ENCODE measurements at regions of chr17 and their contacts with region 1.

Region 1: GRCh38 chr17:56319517-56319916 is 166.2 kb downstream of the ANKFN1 start:
- DNase-seq: peak in 1 of 2 donors; percentile 70
- H3K4me3 ChIP-seq: no peak overlapping the region
- H3K27ac ChIP-seq: no peak overlapping the region
- H3K4me1 ChIP-seq: peaks cover 0 to 5% (median 2%) of the 10 kb centered on the region in 4 donors
- H3K27me3 ChIP-seq: peaks cover 0 to 17% (median 0%) of the 10 kb centered on the region in 3 donors
- CTCF ChIP-seq: peak in 4 of 7 experiments; percentile 35 to 56 (median 40)
- EP300 ChIP-seq: no peak
- POLR2A ChIP-seq: no peak

Region 2: GRCh38 chr17:55527540-55528118 is 791.9 kb before region 1 on chr17:
- intact Hi-C with region 1: loop called (anchors 10 kb)
- DNase-seq: peak in 1 of 2 donors; percentile 83
- H3K4me3 ChIP-seq: no peak overlapping the region
- H3K27ac ChIP-seq: no peak overlapping the region
- H3K4me1 ChIP-seq: peaks cover 0 to 4% (median 1%) of the 10 kb centered on the region in 4 donors
- H3K27me3 ChIP-seq: no peaks in the 10 kb centered on the region
- CTCF ChIP-seq: peak in 4 of 7 experiments; percentile 23 to 42 (median 40)
- EP300 ChIP-seq: no peak
- POLR2A ChIP-seq: no peak

Region 3: GRCh38 chr17:56099649-56100048 is 219.9 kb before region 1 on chr17:
- intact Hi-C with region 1: no loop called
- DNase-seq: no peak
- H3K4me3 ChIP-seq: no peak overlapping the region
- H3K27ac ChIP-seq: no peak overlapping the region
- H3K4me1 ChIP-seq: no peaks in the 10 kb centered on the region
- H3K27me3 ChIP-seq: no peaks in the 10 kb centered on the region
- CTCF ChIP-seq: no peak
- EP300 ChIP-seq: no peak
- POLR2A ChIP-seq: no peak

Region 4: DNA sequence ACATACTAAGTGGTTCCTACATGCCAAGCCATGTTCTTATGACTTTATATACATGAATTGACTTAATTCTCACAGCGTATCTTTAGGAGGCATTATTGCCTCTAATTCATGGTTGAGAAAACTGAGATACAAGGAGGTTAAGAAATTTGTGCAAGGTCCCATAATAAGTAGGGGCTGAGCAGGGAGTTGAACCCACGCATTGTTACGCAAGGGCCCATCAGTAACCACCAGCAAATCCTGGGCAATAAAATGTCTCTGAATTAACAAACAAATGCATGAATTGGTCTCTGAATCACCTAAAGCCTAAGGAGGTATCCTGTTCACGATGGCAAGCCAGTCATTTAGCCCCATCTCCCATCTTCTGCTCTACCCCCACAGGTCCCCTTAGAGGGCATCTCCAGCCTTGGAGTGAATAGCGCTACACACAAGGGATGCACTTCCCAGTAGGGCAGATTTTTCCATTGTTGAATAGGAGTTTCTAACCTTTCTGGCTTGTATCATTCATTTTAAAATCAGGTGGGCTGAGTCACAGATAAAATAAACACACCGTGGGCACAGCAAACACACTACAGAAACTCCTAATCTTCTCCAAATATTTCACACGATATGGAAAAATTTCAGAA is 72.6 kb after region 1 on chr17:
- intact Hi-C with region 1: no loop called
- DNase-seq: no peak
- H3K4me3 ChIP-seq: no peak overlapping the region
- H3K27ac ChIP-seq: no peak overlapping the region
- H3K4me1 ChIP-seq: no peaks in the 10 kb centered on the region
- H3K27me3 ChIP-seq: no peaks in the 10 kb centered on the region
- CTCF ChIP-seq: no peak
- EP300 ChIP-seq: no peak
- POLR2A ChIP-seq: no peak

Measured in stomach (tissue), 19 donors.